WTC11 (cell line): ENCODE measurements at regions of chr15 and their contacts with region 1.

Region 1: DNA sequence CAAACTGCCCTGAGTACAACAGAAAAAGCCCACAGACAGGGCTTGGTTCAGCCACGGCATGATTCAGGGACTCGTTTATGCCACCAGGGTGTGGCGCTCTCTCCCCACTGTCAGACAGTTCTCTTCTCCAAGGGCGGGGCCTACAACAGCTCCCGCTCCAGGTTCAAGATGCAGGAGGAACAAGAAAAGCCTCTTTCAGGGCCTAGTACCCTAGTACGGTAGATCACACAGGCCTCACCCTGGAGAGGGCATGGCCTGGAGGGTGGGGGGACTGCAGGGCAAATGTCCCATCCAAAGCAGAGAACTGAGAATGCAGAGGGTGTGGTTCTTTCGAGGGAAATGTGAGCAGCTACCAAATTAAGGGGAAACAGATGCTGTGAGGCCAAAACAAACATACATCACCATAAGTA is 12.0 kb downstream of the MESD start:
- DNase-seq: peak; percentile 78
- ATAC-seq: peak; percentile 93
- H3K4me3 Mint-ChIP-seq: no peak overlapping the region
- H3K27ac Mint-ChIP-seq: peak overlapping the region; percentile 69; the same call in 1 of the 2 replicates
- H3K4me1 Mint-ChIP-seq: peaks cover 31% of the 10 kb centered on the region
- H3K27me3 Mint-ChIP-seq: no peaks in the 10 kb centered on the region
- CTCF ChIP-seq: peak; percentile 53

Region 2: DNA sequence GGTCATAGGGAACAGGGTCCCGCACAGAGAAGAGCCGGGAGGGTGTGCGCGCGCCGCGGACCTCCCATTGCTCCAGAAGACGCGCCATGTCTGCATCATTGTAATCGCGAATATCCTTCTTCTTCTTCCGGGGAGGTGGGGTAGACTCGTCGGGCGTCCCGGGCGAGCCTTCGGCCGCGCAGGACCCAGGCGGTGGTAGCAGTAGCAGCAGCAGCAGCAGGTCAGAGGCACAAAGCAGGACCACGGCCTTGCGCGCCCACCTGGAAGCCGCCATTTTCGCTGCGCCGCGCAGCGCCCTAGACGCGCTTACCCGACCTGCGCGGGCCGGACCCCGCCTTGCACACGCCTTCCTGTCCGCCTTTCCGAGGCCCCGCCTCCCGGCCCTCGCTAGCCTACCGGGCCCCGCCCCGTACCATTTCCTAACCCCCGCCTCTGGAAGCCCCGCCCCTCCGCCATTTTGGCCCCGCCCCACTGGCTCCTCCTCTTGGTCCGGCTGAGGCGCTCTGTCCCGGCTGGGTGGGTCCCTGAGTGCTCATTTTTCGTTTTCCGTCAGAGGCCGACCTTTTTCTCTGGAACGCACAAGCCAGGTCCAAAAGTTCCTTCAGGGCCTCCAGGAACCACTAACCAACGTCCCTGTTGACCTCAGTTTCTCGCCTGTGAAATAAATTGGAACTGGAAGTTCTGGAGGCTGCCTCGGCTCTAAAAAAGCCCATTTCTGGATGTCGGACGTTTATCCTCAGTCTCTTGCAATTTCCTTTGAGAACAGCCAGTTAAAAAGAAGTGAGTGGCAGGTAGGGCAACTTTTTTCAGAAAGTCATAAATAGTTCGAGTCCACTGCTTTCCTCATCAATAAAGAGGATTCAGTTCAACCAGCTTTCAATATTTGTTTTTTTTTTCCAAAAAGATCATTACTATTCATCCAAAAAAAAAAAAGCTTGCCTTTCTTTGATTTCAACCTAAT is 12.2 kb after region 1 on chr15 and contains the start of gene MESD:
- CTCF ChIA-PET with region 1: interaction called, 11 read pairs
- POLR2A ChIA-PET with region 1: interaction called, 3 read pairs
- DNase-seq: peak; percentile 98
- ATAC-seq: peak; percentile 98
- H3K4me3 Mint-ChIP-seq: peak within 1 kb of the TSS; percentile 99
- H3K27ac Mint-ChIP-seq: peak within 1 kb of the TSS; percentile 97
- H3K4me1 Mint-ChIP-seq: peaks cover 48% of the 10 kb centered on the region
- H3K27me3 Mint-ChIP-seq: no peaks in the 10 kb centered on the region
- CTCF ChIP-seq: no peak
- total RNA-seq, gene MESD: 26.9 to 28.3 TPM (median 27.9 TPM) in 3 replicates

Region 3: DNA sequence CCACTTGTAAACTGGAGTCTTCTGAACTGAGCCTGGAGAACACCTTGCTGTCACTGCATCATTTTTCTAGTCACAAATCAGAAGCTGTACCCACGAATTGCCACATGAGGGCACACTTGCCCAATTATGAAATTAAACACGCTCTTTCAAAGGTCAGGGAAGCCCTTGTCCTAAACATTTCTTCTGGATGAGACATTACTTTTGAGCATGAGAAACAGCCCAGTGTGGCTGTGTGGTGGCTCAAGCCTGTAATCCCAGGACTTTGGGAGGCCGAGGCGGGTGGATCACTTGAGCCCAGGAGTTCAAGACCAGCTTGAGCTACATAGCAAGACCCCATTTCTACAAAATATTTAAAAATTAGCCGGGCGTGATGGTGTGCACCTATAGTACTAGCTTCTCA is 128.9 kb after region 1 on chr15:
- CTCF ChIA-PET with region 1: interaction called, 10 read pairs
- POLR2A ChIA-PET with region 1: no interaction called
- DNase-seq: peak; percentile 42
- ATAC-seq: peak; percentile 71
- H3K4me3 Mint-ChIP-seq: no peak overlapping the region
- H3K27ac Mint-ChIP-seq: no peak overlapping the region
- H3K4me1 Mint-ChIP-seq: peaks cover 7% of the 10 kb centered on the region
- H3K27me3 Mint-ChIP-seq: no peaks in the 10 kb centered on the region; the same call in 1 of the 2 replicates
- CTCF ChIP-seq: no peak